ENCODE measurements at regions of chr1 and their contacts with region 1.

Region 1: GRCh38 chr1:174989536-174990220 is 10.1 kb upstream of the CACYBP start:
- DNase-seq: no peak
- ATAC-seq: peak; percentile 71

Region 2: DNA sequence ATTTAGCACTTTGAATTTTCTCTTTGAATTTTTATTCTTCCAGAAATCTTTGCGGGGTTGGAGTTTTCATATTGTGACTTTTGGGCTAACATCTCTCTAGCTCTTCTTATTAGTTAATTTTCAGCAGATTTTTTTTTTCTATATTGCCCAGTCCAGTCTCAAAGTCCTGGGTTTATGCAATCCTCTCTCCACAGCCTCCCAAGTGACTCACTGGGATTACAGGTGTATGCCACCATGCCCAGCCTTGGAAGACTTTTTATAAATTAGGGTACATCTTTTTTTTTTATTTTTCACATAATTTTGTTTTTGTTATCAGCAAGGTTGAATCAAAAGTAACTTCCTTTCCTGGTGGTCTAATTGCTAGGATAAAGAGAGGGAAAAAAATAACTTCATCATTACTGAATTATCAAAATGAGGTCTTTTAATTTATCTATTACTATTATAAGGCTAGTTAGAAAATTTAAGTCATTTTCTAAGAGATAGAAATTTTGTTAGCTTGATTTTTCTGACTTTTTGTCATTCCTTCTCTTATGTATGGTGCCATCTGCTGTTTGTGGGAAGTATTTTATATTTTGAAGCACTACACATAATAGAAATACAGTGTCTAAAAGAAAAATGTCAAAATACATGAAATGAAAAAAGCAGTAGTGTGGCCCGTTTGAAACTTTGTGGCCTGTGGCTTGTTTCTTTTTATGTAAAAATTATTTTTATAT is 263.4 kb before region 1 on chr1:
- intact Hi-C with region 1: no loop called
- DNase-seq: no peak
- ATAC-seq: no peak

Region 3: DNA sequence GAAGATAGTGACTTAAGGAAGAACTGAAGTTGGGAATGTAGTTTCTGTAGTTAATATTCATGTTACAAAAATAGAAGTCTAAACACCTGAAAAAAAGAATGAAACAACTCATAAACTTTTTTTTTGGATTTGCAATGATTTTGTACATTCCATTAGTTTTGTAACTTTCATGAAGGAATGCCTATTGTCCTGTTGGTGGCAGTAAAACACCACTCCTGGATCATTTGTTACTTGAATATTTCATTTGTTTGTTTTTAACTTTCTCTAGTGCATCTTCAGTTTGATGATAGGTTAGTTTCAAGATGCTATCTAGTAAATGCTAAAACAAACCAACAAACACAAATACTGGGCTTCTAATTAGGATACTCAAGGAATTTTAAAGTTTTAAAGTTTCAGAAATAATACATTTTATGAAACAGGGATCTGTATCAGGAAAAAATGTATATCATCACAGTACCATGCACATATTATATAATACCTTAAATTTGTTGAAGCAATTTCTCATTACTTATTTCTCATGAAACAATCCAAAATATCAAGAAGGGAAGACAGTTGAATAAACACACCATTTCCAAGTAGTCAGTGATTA is 219.6 kb before region 1 on chr1:
- intact Hi-C with region 1: loop called (anchors 5 kb)
- DNase-seq: no peak
- ATAC-seq: peak; percentile 65